ENCODE measurements at regions of chr3 and their contacts with region 1.

Region 1: DNA sequence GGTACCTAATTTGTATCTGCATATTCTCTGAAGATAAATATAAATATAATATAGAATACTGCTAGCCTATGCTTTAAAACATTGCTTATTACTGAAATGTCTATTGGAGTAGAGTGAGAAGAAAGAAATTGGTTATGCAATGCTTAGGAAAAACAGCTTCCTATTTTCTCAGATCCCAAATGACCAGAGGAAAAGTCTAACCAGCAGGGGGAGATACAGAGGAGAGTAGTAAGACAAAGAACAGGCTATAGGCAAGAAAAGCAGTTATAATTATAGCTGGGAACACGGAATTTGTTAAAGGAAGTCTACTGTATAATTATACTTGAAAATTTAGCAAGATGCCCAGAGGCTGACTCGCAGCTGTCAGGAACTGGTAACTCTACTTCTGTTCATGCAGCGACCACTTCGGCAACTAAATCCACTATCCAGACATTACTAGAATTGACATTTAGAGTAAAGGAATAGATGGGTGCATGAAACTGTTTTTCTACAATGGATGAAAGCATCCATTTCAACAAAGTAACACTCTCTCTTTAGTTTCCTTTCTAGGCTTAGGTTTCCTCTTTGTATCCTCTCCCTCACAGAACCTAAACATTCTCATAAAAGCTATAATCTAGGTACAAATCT is 97.2 kb downstream of the TBC1D5 start:
- DNase-seq: peak; percentile 33
- H3K4me3 ChIP-seq: no peak overlapping the region
- CTCF ChIP-seq: peak; percentile 56

Region 2: DNA sequence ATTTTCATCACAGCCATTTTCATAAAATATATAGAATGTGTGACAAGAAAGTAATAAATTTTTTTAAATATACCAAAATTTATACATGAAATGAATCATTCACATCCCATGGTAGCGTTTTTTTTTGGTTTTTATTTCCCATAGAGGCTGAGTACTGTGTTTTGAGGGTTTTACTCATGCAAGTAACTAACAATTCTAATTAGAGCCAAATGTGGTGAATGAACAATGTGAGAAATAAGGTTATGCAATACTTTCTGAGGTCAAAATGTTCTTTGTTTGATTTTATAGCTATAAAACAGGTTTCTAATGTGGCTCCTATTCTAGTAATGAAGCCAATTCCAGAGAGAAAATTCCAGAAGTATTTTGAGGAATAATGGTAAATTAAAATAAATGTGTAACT is 289.6 kb before region 1 on chr3:
- CTCF ChIA-PET with region 1: no interaction called
- POLR2A ChIA-PET with region 1: no interaction called
- DNase-seq: no peak
- H3K4me3 ChIP-seq: no peak overlapping the region
- CTCF ChIP-seq: no peak

Region 3: GRCh38 chr3:17626395-17626794 is 18.8 kb before region 1 on chr3:
- CTCF ChIA-PET with region 1: interaction called, 15 read pairs
- POLR2A ChIA-PET with region 1: no interaction called
- DNase-seq: no peak
- H3K4me3 ChIP-seq: no peak overlapping the region
- CTCF ChIP-seq: no peak

Region 4: GRCh38 chr3:17655743-17656142 is 10.6 kb after region 1 on chr3:
- CTCF ChIA-PET with region 1: interaction called, 56 read pairs
- POLR2A ChIA-PET with region 1: no interaction called
- DNase-seq: no peak
- H3K4me3 ChIP-seq: no peak overlapping the region
- CTCF ChIP-seq: no peak

Region 5: GRCh38 chr3:17686613-17687012 is 41.4 kb after region 1 on chr3:
- CTCF ChIA-PET with region 1: interaction called, 14 read pairs
- POLR2A ChIA-PET with region 1: no interaction called
- DNase-seq: no peak
- H3K4me3 ChIP-seq: no peak overlapping the region
- CTCF ChIP-seq: no peak

Measured in AG04449 (cell line).